Posterior cingulate gyrus (tissue), 11 donors: ENCODE measurements at regions of chr15 and their contacts with region 1.

Region 1: DNA sequence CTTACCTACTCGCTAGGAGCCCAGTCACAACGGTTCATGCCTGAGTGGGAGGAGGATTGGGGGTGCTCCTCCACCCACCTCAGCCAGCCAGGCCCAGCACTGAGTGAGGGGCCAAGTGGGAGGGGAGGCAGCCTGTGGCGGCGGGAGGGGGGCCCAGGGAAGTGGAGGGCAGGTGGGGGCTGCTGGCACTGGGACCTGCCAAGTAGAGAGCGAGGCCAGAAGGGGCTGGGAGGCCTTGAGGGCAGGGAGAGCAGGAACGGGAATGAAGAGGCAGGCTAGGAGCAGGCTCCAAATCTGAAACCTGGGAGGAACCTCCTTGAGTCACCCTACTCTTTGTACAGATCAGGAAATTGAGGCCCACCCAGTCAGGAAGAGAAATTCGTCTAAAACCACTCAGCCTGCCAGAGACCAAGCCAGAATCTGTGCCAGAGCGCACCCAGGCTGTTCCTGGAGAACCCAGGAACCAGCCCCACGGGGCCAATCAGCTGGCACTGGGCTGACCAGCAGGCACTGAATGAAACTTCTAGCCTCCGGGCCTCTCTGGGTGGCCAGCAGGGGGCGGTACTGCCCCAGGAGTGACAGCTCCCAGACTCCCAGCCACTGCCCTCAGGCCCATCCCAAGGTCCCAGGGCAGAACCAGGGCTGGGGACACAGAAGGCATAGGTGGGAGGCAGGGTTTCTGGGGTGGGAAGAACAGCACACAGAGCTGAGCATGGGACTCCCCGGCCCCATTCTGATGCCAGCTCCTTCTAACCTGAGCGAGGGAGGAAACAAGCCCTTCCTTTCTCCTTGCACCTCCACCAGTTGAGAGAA is 14.8 kb upstream of the CYP11A1 start:
- DNase-seq: peak; percentile 82 to 98 (median 92)

Region 2: DNA sequence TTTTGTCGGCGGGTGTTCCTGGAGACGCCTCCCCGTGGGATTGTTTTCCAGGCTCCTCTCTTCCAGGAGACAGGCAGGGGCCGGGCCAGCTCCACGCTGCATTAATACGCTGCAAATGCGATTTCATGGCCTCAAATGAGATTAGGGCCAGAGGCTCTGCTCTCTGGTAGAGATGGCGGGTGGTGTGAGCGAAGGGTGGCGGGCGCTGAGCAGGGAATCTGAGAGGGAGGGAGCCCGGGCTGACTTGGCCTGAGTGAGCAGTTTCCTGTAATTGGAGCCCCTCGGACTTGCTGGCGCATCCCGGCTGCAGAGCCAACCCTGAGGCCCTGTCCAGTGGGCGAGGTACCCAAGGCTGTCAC is 153.5 kb before region 1 on chr15:
- intact Hi-C with region 1: no loop called
- DNase-seq: peak in 2 of 10 donors; percentile 71 to 72

Region 3: DNA sequence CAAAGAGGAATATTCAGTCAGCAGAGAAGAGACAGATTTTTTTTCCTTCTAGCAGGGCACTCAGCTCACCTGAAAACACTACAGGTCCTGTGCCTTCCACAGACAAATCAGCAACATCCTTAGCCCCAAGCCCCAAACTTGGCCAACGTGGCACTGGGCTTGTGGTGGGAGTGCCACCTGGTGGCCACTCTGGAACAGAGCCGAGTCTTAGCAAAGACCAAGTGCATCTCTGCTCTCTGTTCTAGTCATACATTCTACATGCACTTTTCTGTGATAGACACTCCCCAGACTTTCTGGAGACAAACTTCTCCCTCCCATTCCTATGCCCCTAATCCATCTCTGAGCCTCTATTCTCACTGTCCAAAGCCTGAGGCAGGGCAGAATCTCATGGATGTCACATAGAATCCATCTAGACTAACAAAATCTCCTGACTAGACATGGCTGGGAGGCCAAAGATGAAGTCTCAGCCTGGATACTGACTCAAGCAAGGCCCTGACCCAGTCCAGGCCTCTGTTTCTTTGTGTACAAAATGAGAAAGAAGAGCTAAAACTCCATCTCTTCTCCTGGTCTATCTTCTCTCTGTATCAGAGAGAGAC is 56.6 kb after region 1 on chr15:
- intact Hi-C with region 1: loop called (anchors 1 kb)
- DNase-seq: peak; percentile 68 to 98 (median 84)